ENCODE measurements at regions of chr20 and their contacts with region 1.

Region 1: GRCh38 chr20:37999526-38000263 is 33.6 kb downstream of the TTI1 start:
- DNase-seq: no peak
- ATAC-seq: no peak
- H3K4me3 ChIP-seq: no peak overlapping the region
- H3K27ac ChIP-seq: no peak overlapping the region
- H3K4me1 ChIP-seq: peaks cover 14% of the 10 kb centered on the region
- H3K27me3 ChIP-seq: no peaks in the 10 kb centered on the region
- CTCF ChIP-seq: no peak

Region 2: DNA sequence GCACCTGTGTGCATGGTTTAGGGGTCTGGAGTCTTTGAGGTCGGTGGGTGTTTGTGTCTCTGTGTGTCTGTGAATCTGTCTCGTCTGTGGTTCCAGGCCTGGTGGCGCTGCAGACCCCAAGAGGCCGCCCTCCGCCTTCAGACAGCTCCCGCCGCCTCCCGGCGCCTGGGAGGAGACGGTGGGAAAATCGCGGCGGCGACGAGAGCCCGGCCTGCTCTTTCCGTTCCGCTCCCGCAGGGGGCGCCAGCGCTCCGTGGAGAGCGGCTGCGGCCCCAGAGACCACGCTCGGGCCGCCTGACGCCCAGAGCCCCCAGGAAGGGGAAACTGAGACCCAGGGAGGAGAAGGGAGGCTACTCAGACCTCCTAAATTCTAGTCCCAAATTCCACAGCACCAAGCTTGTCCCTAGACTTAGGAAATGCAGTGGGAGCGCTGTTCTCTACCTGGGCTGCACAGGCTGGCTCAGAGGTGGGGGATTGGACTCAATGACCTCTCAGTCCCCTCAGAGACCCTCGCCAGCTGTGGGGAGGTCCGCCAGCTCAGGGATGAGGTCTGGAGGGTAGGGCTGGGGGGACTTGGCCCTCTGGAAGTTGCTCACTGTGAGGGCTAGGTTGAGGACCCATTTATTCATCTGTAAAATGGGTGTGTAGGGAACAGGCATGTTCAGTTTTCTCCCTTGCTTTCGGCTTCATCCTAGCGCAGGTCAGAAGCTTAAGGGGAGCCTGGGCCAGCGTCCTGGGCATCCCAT is 435.1 kb before region 1 on chr20:
- intact Hi-C with region 1: loop called (anchors 5 to 10 kb)
- DNase-seq: peak; percentile 37 to 66
- ATAC-seq: peak; percentile 72 to 91 (median 82)
- H3K4me3 ChIP-seq: no peak overlapping the region
- H3K27ac ChIP-seq: no peak overlapping the region
- H3K4me1 ChIP-seq: no peaks in the 10 kb centered on the region
- H3K27me3 ChIP-seq: peaks cover 0 to 44% (median 8%) of the 10 kb centered on the region in 3 donors
- CTCF ChIP-seq: peak; percentile 89